Activated CD8-positive, alpha-beta T cell treated with anti-CD3 and anti-CD28 coated beads for 36 hours (primary cell): ENCODE measurements at regions of chr4 and their contacts with region 1.

Region 1: DNA sequence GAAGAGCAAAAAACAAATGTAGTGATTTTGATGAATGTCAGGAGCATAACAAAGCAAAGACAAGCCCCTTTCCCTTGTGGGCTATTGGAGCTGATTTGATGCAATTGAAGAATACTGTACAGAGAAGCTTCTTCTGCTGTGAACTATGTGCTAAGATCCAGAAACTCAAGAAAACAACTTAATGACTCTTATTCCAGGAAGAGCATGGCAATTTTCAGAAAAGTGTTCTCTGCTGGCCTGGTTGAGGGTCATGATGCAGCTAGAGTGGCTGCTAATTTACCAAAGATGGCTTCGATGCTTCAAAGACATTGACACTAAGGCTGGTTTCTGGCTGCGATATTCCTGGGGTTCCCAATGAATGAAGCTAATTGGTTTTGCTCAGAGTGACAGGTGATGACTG is 45.8 kb downstream of the TNIP3 start:
- DNase-seq: no peak
- ATAC-seq: no peak
- H3K4me3 Mint-ChIP-seq: no peak overlapping the region
- H3K27ac Mint-ChIP-seq: no peak overlapping the region
- H3K4me1 Mint-ChIP-seq: peaks cover 31% of the 10 kb centered on the region
- H3K27me3 Mint-ChIP-seq: no peaks in the 10 kb centered on the region
- CTCF ChIP-seq: no peak

Region 2: GRCh38 chr4:121009578-121010478 is 108.5 kb before region 1 on chr4:
- CTCF ChIA-PET with region 1: no interaction called
- POLR2A ChIA-PET with region 1: no interaction called
- intact Hi-C with region 1: no loop called
- DNase-seq: no peak
- ATAC-seq: no peak
- H3K4me3 Mint-ChIP-seq: no peak overlapping the region
- H3K27ac Mint-ChIP-seq: peak overlapping the region; percentile 45
- H3K4me1 Mint-ChIP-seq: peaks cover 65% of the 10 kb centered on the region
- H3K27me3 Mint-ChIP-seq: no peaks in the 10 kb centered on the region
- CTCF ChIP-seq: no peak

Region 3: GRCh38 chr4:121129606-121130325 is 11.4 kb after region 1 on chr4:
- CTCF ChIA-PET with region 1: interaction called, 11 read pairs
- POLR2A ChIA-PET with region 1: no interaction called
- intact Hi-C with region 1: no loop called
- DNase-seq: no peak
- ATAC-seq: no peak
- H3K4me3 Mint-ChIP-seq: no peak overlapping the region
- H3K27ac Mint-ChIP-seq: no peak overlapping the region
- H3K4me1 Mint-ChIP-seq: peaks cover 32% of the 10 kb centered on the region
- H3K27me3 Mint-ChIP-seq: no peaks in the 10 kb centered on the region
- CTCF ChIP-seq: no peak